ENCODE measurements at regions of chr7 and their contacts with region 1.

Region 1: GRCh38 chr7:21261627-21262594 is 166.0 kb upstream of the SP4 start:
- DNase-seq: peak in 1 of 4 donors; percentile 13
- ATAC-seq: peak; percentile 37
- H3K4me3 ChIP-seq: no peak overlapping the region
- H3K27ac ChIP-seq: no peak overlapping the region
- H3K4me1 ChIP-seq: no peaks in the 10 kb centered on the region
- H3K27me3 ChIP-seq: peaks cover 0 to 2% of the 10 kb centered on the region in 2 donors
- CTCF ChIP-seq: peak in 1 of 2 donors; percentile 17

Region 2: DNA sequence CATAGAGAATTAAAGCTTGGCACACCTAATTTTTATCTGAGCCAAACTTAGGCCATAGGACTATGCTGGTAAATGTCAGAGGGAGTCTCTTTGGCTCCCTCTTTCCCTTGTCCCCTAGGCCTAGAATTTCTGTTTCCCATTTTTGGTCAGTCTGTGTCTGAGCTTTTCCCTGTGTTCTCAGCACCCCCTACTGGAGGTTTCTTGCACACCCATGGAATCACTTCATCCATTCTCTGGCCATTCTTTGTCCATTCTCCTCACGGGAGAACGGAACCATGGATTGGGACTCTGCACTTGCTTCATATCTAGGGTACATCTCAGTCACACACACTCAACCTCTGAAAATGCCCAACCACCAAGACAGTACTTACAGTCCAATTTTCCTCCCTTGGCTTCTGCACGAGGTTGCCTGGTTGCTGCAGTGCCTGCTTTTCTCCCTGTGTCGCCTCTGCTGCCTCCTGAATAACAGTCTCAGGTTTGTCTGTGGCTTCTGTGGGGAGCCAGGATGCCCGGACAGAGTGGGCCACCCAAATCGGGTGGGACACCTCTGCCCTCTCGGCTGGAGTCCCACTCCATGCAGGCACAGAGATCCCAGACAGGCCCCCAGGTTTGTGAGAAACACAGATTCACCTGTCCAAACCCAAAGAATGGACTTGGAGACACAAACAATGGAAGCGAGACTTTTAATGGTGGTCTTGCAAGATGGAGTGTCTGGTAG is 245.9 kb after region 1 on chr7:
- intact Hi-C with region 1: loop called in 1 of 2 experiments (anchors 5 kb)
- DNase-seq: peak in 3 of 4 donors; percentile 32 to 51 (median 37)
- ATAC-seq: peak; percentile 85
- H3K4me3 ChIP-seq: no peak overlapping the region
- H3K27ac ChIP-seq: no peak overlapping the region
- H3K4me1 ChIP-seq: no peaks in the 10 kb centered on the region
- H3K27me3 ChIP-seq: no peaks in the 10 kb centered on the region
- CTCF ChIP-seq: peak; percentile 72 to 79

Measured in left lung (tissue), 14 donors.